CD14-positive monocyte (primary cell): ENCODE measurements at regions of chr1 and their contacts with region 1.

Region 1: DNA sequence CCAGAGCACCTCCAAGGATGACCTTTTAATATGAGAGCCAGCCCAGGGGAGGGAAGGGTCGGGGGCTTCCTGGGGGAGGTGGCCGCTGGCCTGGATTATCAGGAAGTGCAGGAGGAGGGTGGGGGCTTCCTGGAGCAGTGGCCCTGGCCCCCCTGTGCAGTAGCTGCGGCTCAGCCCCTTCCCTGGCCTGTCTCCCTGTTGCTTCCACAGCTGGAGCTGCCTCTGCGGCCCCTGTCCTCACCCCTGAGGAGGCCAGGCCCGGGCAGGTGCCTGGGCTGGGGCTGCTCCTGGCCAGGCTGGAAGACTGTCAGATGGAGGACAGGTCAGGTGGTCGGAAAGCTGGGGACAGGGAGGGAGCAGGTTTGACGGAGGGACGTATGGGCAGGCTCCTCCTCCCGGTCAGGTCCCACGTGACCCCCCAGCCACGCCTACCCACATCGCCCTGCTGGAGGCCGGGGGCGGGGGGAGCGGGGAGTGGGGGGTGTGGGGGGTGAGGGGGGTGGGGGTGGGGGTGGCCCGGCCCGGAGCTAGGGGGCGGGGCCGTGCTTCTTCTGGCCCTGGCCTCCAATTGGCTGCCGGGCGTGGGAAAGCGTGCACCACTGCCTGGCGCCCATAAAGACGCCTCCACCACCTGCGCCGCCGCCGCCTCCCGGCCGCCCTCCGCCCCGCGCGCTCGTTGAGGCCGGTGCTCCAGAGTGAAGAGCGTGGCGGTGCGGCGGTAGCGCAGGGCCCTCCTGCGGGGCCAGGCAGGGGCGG is 10.2 kb upstream of the TNFRSF14 start:
- DNase-seq: peak; percentile 88 to 93 (median 91)
- H3K4me3 ChIP-seq: peak overlapping the region; percentile 52 to 88 (median 76)
- H3K4me3 Mint-ChIP-seq: peak overlapping the region; percentile 76 to 81
- H3K27ac ChIP-seq: peak overlapping the region; percentile 99 to 100
- H3K27ac Mint-ChIP-seq: peak overlapping the region in 6 of 7 donors; percentile 54 to 99 (median 96)
- H3K4me1 ChIP-seq: peaks cover 40 to 52% of the 10 kb centered on the region in 2 donors
- H3K4me1 Mint-ChIP-seq: peaks cover 28% of the 10 kb centered on the region
- H3K27me3 ChIP-seq: peaks cover 0 to 21% of the 10 kb centered on the region in 2 donors
- H3K27me3 Mint-ChIP-seq: peaks cover 13 to 38% (median 21%) of the 10 kb centered on the region in 3 donors
- CTCF ChIP-seq: no peak

Region 2: GRCh38 chr1:2133039-2133878 is 412.7 kb before region 1 on chr1:
- intact Hi-C with region 1: loop called in 1 of 2 experiments (anchors 5 kb)
- DNase-seq: peak; percentile 97 to 99 (median 99)
- H3K4me3 ChIP-seq: peak overlapping the region; percentile 36 to 76 (median 40)
- H3K4me3 Mint-ChIP-seq: peak overlapping the region; percentile 81 to 88
- H3K27ac ChIP-seq: peak overlapping the region; percentile 63 to 87
- H3K27ac Mint-ChIP-seq: peak overlapping the region; percentile 93 to 97 (median 95)
- H3K4me1 ChIP-seq: peaks cover 15 to 23% of the 10 kb centered on the region in 2 donors
- H3K4me1 Mint-ChIP-seq: peaks cover 12% of the 10 kb centered on the region
- H3K27me3 ChIP-seq: peaks cover 0 to under 1% of the 10 kb centered on the region in 2 donors
- H3K27me3 Mint-ChIP-seq: peaks cover 7 to 16% (median 13%) of the 10 kb centered on the region in 3 donors
- CTCF ChIP-seq: no peak

Region 3: DNA sequence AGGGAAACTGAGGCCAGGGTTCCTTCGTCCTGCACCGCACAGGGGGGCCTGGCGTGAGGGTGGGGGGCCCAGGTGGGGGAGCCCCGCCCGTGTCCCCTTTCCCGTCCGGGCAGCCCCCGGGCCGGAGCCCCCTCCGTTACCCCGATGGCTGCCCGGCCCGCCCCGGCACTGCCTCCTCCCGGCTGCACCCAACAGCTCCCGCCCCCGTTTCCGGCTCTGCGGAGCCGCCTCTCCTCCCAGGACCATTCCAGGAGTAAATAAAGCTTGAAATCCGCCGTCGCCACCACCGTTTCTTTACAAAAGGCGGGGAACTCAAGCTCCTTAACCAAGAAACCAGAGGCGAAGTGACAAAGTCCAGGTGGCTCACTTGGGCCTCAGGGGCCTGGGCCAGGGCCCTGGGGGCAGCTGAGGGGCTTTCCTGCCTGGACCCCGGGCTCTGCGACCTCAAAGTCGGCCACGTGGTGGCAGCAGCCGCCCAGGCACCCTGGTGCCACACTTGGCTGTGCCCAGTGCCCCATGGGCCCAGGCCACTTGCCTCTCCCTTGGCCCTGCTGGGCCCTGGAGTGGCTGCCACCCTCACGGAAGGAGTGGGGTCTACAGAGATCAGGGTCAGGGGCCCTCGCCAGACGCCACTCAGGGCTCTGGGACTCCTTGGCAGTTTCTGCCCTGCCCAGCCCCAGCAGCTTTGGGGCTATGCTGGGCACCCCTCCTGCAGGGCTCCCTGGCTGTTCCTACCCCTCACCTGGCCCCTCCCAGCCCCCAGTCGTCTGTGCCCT is 350.9 kb before region 1 on chr1:
- intact Hi-C with region 1: loop called in 1 of 2 experiments (anchors 10 kb)
- DNase-seq: peak; percentile 77 to 85 (median 84)
- H3K4me3 ChIP-seq: peak overlapping the region; percentile 54 to 92 (median 61)
- H3K4me3 Mint-ChIP-seq: peak overlapping the region; percentile 78 to 84
- H3K27ac ChIP-seq: peak overlapping the region; percentile 69 to 89
- H3K27ac Mint-ChIP-seq: peak overlapping the region; percentile 76 to 95 (median 90)
- H3K4me1 ChIP-seq: peaks cover 39 to 47% of the 10 kb centered on the region in 2 donors
- H3K4me1 Mint-ChIP-seq: peaks cover 28% of the 10 kb centered on the region
- H3K27me3 ChIP-seq: no peaks in the 10 kb centered on the region
- H3K27me3 Mint-ChIP-seq: peaks cover 0 to 3% (median 1%) of the 10 kb centered on the region in 3 donors
- CTCF ChIP-seq: peak; percentile 99

Region 4: DNA sequence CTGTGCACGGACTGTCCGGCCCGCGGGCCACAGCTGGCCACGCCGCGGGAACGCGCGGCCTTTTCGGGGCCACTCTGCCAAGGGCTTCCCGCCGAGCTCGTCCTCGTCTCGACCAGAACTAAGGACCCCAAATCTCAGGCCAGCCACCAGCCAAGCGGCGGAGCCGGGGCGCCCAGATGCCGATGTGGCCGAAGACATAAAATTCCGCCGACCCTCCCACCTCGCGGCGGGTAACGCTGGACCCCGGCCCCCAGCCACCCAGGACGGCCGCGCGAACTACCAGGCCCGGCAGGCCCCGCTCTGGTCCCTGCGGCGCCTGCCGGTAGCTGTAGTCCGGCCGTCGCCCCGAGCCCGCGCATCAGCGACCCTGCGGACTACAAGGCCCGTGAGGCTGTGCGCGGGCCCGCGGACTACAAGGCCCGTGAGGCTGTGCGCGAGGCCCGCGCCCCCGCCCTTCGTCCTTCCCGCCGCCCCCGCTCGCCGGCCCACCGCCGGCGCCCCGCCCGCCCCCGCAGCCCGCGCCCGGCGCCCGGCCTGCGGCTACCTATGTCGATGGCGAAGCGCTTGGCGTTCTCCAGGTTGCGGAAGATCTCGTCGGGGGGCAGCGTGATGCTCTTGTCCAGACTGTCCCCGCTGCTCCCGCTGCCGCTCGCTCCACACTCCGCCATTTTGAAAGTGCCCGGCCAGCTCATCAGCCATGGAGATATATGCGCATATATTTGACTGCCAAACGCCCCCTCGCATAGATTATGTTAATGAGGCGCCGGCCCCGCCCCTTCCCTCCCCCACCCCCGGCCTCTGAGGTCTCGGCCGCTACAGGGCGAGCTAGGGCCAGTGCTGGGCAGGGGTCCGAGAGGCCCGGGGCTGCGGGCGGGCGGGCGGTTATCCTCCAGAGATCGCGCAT is 19.8 kb before region 1 on chr1 and contains the start of gene PANK4:
- intact Hi-C with region 1: loop called (anchors 2 kb)
- DNase-seq: peak; percentile 89
- H3K4me3 ChIP-seq: peak within 1 kb of the TSS; percentile 64 to 91 (median 67)
- H3K4me3 Mint-ChIP-seq: peak within 1 kb of the TSS; percentile 88 to 92
- H3K27ac ChIP-seq: peak within 1 kb of the TSS; percentile 34 to 74
- H3K27ac Mint-ChIP-seq: peak within 1 kb of the TSS; percentile 64 to 98 (median 94)
- H3K4me1 ChIP-seq: peaks cover 31 to 42% of the 10 kb centered on the region in 2 donors
- H3K4me1 Mint-ChIP-seq: peaks cover 31% of the 10 kb centered on the region
- H3K27me3 ChIP-seq: peaks cover 25 to 37% of the 10 kb centered on the region in 2 donors
- H3K27me3 Mint-ChIP-seq: peaks cover 27 to 45% (median 37%) of the 10 kb centered on the region in 3 donors
- CTCF ChIP-seq: no peak
- polyA plus RNA-seq, gene PANK4: 11.9 to 30.2 (median 13.7) TPM

Region 5: GRCh38 chr1:2642560-2643413 is 96.8 kb after region 1 on chr1:
- intact Hi-C with region 1: loop called in 1 of 2 experiments (anchors 5 kb)
- DNase-seq: peak; percentile 79 to 89 (median 84)
- H3K4me3 ChIP-seq: peak overlapping the region; percentile 54 to 86 (median 56)
- H3K4me3 Mint-ChIP-seq: peak overlapping the region; percentile 80 to 91
- H3K27ac ChIP-seq: peak overlapping the region in 1 of 2 donors; percentile 88
- H3K27ac Mint-ChIP-seq: peak overlapping the region in 4 of 7 donors; percentile 8 to 67 (median 55)
- H3K4me1 ChIP-seq: peaks cover 14 to 21% of the 10 kb centered on the region in 2 donors
- H3K4me1 Mint-ChIP-seq: peaks cover 8% of the 10 kb centered on the region
- H3K27me3 ChIP-seq: peaks cover 0 to 4% of the 10 kb centered on the region in 2 donors
- H3K27me3 Mint-ChIP-seq: peaks cover 5 to 20% (median 7%) of the 10 kb centered on the region in 3 donors
- CTCF ChIP-seq: no peak